OCI-LY7 (cell line): ENCODE measurements at regions of chr3 and their contacts with region 1.

Region 1: DNA sequence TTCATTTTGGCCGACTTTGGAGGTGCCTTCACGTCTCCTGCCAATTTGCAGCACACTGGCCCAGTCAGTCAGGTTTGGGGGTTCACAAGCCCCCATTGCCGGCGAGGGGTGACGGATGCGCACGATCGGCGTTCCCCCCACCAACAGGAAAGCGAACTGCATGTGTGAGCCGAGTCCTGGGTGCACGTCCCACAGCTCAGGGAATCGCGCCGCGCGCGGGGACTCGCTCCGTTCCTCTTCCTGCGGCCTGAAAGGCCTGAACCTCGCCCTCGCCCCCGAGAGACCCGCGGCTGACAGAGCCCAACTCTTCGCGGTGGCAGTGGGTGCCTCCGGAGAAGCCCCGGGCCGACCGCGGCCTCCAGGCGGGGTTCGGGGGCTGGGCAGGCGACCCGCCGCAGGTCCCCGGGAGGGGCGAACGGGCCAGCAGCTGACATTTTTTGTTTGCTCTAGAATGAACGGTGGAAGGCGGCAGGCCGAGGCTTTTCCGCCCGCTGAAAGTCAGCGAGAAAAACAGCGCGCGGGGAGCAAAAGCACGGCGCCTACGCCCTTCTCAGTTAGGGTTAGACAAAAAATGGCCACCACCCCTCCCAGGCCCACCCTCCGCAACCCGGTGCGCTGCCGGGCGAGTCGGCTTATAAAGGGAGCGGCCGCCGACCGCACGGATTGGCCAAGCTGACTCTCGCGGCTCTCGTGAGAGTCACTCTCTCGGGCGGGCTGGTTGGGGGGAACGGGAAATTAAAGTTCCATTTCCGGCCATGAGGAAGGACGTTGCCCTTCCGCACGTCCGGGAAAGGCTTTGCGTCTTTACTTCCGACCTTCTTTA is at the start of gene TERC:
- DNase-seq: peak; percentile 88
- H3K4me3 ChIP-seq: peak within 1 kb of the TSS; percentile 70
- H3K27ac ChIP-seq: peak within 1 kb of the TSS; percentile 28
- H3K4me1 ChIP-seq: peaks cover 21% of the 10 kb centered on the region
- CTCF ChIP-seq: no peak
- total RNA-seq, gene TERC: 143 and 210 TPM in 2 replicates

Region 2: GRCh38 chr3:169846458-169847193 is 82.0 kb after region 1 on chr3:
- CTCF ChIA-PET with region 1: interaction called, 5 read pairs
- POLR2A ChIA-PET with region 1: interaction called, 6 read pairs
- intact Hi-C with region 1: loop called (anchors 5 kb)
- DNase-seq: no peak
- H3K4me3 ChIP-seq: no peak overlapping the region
- H3K27ac ChIP-seq: no peak overlapping the region
- H3K4me1 ChIP-seq: peaks cover 34% of the 10 kb centered on the region
- CTCF ChIP-seq: no peak

Region 3: GRCh38 chr3:169966428-169966950 is 201.8 kb after region 1 on chr3 and contains the start of gene SEC62:
- CTCF ChIA-PET with region 1: no interaction called
- POLR2A ChIA-PET with region 1: interaction called, 7 read pairs
- intact Hi-C with region 1: loop called (anchors 2 kb)
- DNase-seq: peak; percentile 97
- H3K4me3 ChIP-seq: peak within 1 kb of the TSS; percentile 81
- H3K27ac ChIP-seq: peak within 1 kb of the TSS; percentile 88
- H3K4me1 ChIP-seq: peaks cover 67% of the 10 kb centered on the region
- CTCF ChIP-seq: peak; percentile 78
- total RNA-seq, gene SEC62: 64.5 and 77.4 TPM in 2 replicates

Region 4: GRCh38 chr3:170085396-170085795 is 320.7 kb after region 1 on chr3:
- CTCF ChIA-PET with region 1: no interaction called
- POLR2A ChIA-PET with region 1: interaction called, 3 read pairs
- intact Hi-C with region 1: loop called (anchors 2 kb)
- DNase-seq: no peak
- H3K4me3 ChIP-seq: no peak overlapping the region
- H3K27ac ChIP-seq: no peak overlapping the region
- H3K4me1 ChIP-seq: peaks cover 21% of the 10 kb centered on the region
- CTCF ChIP-seq: no peak

Region 5: GRCh38 chr3:170307671-170308403 is 543.2 kb after region 1 on chr3:
- CTCF ChIA-PET with region 1: no interaction called
- POLR2A ChIA-PET with region 1: interaction called, 4 read pairs
- intact Hi-C with region 1: loop called (anchors 5 kb)
- DNase-seq: no peak
- H3K4me3 ChIP-seq: no peak overlapping the region
- H3K27ac ChIP-seq: no peak overlapping the region
- H3K4me1 ChIP-seq: no peaks in the 10 kb centered on the region
- CTCF ChIP-seq: no peak